ENCODE measurements at regions of chr1 and their contacts with region 1.

Region 1: DNA sequence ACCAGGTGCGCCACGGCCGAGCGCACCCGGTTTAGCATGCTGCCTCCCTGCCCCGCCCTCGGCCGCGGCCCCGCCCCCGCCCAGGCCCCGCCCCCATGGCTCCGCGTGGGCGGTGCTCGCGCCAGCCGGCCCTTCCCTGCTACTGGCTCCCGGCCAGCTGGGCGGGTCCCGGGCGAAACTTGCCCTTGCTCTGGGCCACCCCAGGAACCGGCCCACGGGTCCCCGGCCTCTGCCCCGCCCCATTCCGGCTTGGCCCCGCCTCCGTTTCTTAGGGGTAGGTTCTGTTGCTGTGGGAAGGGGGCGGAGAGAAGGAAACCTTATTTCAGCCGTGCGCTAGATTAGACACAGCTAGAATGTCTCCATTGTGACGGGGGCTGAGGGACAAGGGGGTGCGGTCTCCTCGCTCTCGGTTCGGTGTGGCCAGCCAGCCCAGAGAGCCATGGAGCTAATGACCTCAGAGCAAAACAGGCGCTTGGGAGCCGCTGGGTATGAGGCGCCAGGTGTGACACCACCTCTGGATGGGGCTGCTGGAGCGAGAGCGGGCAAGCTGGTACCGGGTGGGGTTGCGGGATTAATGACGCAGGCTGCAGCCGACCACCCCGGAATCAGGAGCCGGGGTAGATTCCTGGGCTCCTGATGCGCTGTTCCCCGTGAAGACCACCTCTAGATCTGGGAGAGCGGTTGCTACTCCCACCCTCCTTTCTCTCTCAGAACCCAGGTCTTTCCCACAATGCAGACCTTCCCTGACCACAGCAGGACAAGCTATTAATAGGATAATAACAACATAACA is at the start of gene PPM1J:
- DNase-seq: peak; percentile 97
- CTCF ChIP-seq: no peak

Region 2: DNA sequence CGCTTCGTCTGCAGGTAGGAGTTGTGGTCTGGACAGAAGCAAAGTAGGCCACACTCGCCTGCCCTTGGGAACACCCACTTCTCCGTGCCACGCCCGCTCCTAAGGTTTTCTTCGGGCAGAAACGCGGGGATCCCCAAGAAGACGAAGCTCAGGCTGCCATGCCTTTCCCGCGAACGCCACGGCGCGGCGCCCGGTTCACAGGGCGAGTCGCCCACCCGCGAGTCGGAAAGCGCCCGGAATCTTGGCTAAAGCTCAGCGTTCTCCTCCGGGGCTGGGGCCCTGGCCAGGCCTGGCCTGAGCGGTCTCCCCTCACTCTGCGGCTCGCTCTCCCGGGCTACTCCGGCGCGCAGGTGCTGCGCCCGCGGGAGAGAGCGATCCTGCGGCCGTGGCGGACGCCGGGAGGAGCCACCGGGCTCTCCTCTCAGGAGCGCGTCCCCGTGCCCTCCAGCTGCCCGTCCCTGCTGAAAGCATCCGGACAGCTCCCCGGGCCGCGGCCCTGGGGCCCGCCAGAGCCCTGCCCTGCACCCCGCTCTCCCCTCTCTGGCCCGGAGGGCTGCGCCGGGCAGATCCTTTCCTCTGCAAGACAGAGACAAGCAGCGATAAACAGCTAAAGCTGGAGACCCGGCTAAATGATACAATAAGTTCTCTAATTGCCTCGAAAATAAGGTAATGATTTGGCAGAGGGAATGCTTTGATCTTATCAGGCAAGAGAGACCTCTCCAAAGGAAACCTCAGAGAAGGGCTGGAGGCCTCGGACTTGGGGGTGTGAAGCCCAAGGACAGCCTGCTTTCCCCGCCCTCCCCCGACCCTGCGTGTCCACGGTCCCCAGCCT is 213.4 kb before region 1 on chr1:
- CTCF ChIA-PET with region 1: interaction called, 11 read pairs
- POLR2A ChIA-PET with region 1: no interaction called
- DNase-seq: peak; percentile 67
- CTCF ChIP-seq: peak; percentile 89

Region 3: DNA sequence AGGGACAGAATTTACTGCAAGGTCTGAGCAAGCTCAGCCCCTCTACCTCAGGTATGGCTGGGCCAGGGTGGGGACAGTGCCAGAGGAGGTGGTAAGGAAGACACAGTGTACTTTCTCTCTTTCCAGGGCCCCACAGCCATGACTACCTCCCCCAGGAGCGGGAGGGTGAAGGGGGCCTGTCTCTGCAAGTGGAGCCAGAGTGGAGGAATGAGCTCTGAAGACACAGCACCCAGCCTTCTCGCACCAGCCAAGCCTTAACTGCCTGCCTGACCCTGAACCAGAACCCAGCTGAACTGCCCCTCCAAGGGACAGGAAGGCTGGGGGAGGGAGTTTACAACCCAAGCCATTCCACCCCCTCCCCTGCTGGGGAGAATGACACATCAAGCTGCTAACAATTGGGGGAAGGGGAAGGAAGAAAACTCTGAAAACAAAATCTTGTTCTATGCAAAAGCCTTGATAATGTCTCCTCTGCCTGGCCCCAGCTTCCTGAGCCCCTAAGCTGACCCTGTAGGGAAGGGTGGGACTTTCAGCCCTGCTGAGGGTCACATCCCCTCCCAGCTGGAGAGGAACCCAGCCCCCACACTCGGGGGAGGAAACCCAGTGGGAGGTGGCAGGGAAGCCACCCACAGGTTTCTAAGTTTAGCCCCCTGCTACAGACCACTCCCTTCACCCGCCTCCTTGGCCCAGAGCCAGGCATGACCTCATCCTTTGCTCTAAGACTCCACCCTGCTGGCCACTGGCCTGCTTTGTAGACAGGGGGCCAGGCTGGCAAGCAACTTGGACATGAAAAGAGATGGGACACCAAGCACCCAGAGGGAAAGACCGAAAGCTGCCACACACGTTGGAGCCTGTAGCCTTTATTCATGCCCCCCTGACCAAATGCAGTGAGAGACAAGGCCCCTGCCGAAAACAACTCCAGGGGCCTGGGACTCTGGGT is 14.9 kb before region 1 on chr1:
- CTCF ChIA-PET with region 1: interaction called, 18 read pairs
- POLR2A ChIA-PET with region 1: interaction called, 5 read pairs
- DNase-seq: peak; percentile 79
- CTCF ChIP-seq: no peak

Region 4: DNA sequence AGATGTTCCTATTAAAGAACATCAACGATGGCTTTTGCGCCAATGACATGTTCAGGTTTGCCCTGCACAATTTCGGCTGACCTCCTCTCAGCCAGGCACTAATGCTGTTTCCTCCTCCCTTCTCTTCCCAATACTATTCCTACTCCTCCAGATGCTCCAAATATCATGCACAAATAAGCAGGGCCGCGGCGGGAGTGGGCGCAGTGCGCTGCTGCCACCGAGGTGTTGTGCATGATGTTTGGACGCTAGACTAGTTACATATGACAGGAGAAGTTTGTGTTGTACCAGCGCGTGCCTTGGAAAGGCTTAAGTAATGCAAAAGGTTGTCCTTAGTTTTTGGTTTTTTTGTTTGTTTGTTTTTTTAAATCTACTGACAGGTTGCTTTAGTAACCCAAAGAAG is 32.9 kb after region 1 on chr1:
- CTCF ChIA-PET with region 1: interaction called, 11 read pairs
- POLR2A ChIA-PET with region 1: no interaction called
- DNase-seq: no peak
- CTCF ChIP-seq: no peak

Region 5: DNA sequence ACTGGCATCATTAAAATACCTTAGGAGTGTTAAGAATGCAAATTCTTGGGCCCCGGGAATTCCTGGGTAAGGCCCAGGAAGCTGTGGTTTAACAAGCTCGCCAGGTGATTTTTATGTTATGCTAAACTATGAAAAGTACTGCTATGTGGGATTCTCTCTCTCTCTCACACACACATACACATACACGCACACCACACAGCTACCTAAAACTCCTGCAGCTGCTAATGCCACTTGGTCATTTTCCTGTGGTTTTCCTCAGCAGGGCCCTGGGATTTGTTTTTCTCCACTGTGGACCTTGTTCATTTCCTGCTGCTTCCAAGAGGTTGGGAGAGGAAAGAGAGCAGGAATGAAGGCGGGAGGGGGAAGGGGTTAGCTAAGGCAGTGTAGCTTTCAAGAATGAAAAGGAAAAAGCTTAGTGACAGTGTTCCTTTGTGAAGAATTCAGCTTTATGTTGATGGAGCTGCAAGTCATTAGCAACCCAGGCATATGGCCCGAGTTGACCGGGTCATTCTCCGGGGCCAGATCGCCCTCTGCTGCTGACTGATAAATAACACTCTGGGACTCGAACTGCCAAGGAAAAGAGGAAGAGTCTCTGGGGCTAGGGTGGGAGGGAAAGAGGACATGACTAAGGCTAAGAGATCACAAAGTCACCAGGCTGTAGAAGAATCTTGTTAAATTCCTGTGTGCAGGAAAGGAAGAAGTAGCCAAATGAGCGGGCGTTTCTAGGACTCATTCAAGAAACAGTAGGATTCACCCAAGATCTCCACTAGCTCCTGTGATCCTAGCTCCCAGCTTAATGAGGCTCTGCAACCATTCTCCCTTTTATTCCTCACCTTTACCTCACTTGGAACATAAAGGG is 327.1 kb after region 1 on chr1:
- CTCF ChIA-PET with region 1: interaction called, 40 read pairs
- POLR2A ChIA-PET with region 1: no interaction called
- DNase-seq: peak; percentile 75
- CTCF ChIP-seq: peak; percentile 75